ENCODE measurements at regions of chr19 and their contacts with region 1.

Region 1: GRCh38 chr19:39532233-39533002 is at the start of gene EID2B:
- H3K4me3 Mint-ChIP-seq: peak within 1 kb of the TSS; percentile 90
- H3K27ac Mint-ChIP-seq: peak within 1 kb of the TSS; percentile 83
- H3K4me1 Mint-ChIP-seq: peaks cover 20% of the 10 kb centered on the region
- H3K27me3 Mint-ChIP-seq: no peaks in the 10 kb centered on the region

Region 2: GRCh38 chr19:39445265-39446111 is 86.9 kb before region 1 on chr19 and contains the start of gene SUPT5H:
- intact Hi-C with region 1: loop called (anchors 2 kb)
- H3K4me3 Mint-ChIP-seq: peak within 1 kb of the TSS; percentile 98
- H3K27ac Mint-ChIP-seq: peak within 1 kb of the TSS; percentile 98
- H3K4me1 Mint-ChIP-seq: peaks cover 46% of the 10 kb centered on the region
- H3K27me3 Mint-ChIP-seq: no peaks in the 10 kb centered on the region

Region 3: GRCh38 chr19:39474139-39474622 is 58.2 kb before region 1 on chr19:
- intact Hi-C with region 1: loop called (anchors 1 kb)
- H3K4me3 Mint-ChIP-seq: no peak overlapping the region
- H3K27ac Mint-ChIP-seq: no peak overlapping the region
- H3K4me1 Mint-ChIP-seq: peaks cover 7% of the 10 kb centered on the region
- H3K27me3 Mint-ChIP-seq: no peaks in the 10 kb centered on the region

Region 4: GRCh38 chr19:39497996-39498797 is 34.2 kb before region 1 on chr19:
- intact Hi-C with region 1: loop called (anchors 2 kb)
- H3K4me3 Mint-ChIP-seq: no peak overlapping the region
- H3K27ac Mint-ChIP-seq: no peak overlapping the region
- H3K4me1 Mint-ChIP-seq: peaks cover 23% of the 10 kb centered on the region
- H3K27me3 Mint-ChIP-seq: peaks cover 65% of the 10 kb centered on the region

Region 5: GRCh38 chr19:39514840-39515550 is 17.4 kb before region 1 on chr19 and contains the start of gene SELENOV:
- intact Hi-C with region 1: no loop called
- H3K4me3 Mint-ChIP-seq: peak within 1 kb of the TSS; percentile 24
- H3K27ac Mint-ChIP-seq: peak within 1 kb of the TSS; percentile 13
- H3K4me1 Mint-ChIP-seq: peaks cover 22% of the 10 kb centered on the region
- H3K27me3 Mint-ChIP-seq: peaks cover 90% of the 10 kb centered on the region

Measured in dendritic cell treated with granulocyte-macrophage colony-stimulating factor and Interleukin-4, amounts not matched to agents 40 ng/mL and 50 ng/mL, for 4 days (primary cell).